Activated B cell treated with CpG ODN at 0.5 μM for 24 hours (primary cell): ENCODE measurements at regions of chr20 and their contacts with region 1.

Region 1: DNA sequence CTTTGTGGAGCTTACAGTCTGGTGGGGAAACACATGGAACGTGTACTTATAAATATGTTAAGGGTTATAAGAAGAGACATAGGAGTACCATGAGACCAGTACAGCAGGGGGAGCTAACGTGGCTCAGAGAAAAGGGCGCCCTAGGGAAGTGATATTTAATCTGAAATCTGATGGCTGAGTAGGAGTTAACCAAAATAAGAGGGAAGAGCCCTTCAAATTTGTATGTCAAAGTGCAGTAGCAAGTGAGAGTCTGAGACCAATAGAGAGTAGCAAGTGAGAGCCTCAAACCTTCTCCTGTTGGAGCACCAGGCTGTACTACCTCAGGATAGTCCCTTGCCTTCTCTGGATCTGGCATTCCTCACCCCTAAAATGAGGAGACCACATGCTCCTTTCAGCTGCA is 6.1 kb upstream of the PKIG start:
- DNase-seq: no peak
- ATAC-seq: peak; percentile 80
- H3K4me3 Mint-ChIP-seq: peak overlapping the region; percentile 72
- H3K27ac Mint-ChIP-seq: peak overlapping the region; percentile 89
- H3K4me1 Mint-ChIP-seq: peaks cover 44% of the 10 kb centered on the region
- H3K27me3 Mint-ChIP-seq: no peaks in the 10 kb centered on the region
- CTCF ChIP-seq: no peak

Region 2: GRCh38 chr20:44532259-44532980 is 43.9 kb before region 1 on chr20:
- CTCF ChIA-PET with region 1: no interaction called
- POLR2A ChIA-PET with region 1: no interaction called
- intact Hi-C with region 1: loop called (anchors 2 kb)
- DNase-seq: no peak
- ATAC-seq: no peak
- H3K4me3 Mint-ChIP-seq: no peak overlapping the region
- H3K27ac Mint-ChIP-seq: no peak overlapping the region
- H3K4me1 Mint-ChIP-seq: peaks cover 9% of the 10 kb centered on the region
- H3K27me3 Mint-ChIP-seq: no peaks in the 10 kb centered on the region
- CTCF ChIP-seq: no peak

Region 3: DNA sequence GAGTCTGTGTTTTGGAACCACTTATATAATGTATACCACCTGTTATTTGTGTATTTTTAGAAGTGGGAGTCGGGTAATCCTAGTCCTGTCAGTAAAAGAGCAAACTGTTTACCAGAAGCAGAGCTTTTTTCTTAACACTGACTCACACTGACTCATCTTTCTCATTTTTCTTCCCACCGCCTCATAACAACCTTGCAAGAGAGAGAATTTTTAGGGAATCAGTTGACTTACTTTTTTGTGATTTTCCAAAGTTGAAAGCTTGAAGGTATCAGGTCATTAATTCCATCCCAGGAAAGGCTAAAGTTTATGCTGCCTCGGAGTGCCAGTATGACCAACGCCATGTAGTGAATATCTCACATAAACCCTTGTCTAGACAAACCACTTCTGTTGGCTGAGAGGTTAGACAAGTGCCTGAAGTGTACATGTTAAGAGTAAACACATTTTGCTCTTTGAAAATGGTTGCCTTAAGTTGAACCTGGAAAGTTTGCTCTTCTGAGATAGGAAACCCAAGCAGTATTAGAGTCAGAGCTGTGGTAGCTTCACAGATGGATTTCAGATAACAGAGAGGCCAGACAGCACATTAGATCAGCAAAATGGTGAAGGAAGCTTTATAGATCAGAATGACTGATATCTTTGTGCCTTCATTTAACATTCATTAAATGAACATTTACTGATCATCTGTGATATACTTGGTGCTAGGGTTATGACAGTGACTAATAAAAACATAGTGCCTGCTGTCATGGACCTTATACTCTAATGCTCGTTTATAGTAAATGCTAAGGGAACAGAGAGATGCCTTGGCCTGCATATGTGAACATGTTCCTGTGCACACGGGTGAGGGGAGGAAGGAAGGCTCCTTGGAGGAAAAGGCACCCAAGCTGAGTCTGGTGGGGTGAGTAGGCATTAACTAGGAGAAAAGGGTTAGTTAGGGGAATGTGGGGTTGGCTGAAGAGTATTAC is 23.1 kb before region 1 on chr20:
- CTCF ChIA-PET with region 1: no interaction called
- POLR2A ChIA-PET with region 1: no interaction called
- intact Hi-C with region 1: no loop called
- DNase-seq: no peak
- ATAC-seq: no peak
- H3K4me3 Mint-ChIP-seq: no peak overlapping the region
- H3K27ac Mint-ChIP-seq: no peak overlapping the region
- H3K4me1 Mint-ChIP-seq: no peaks in the 10 kb centered on the region
- H3K27me3 Mint-ChIP-seq: peaks cover 1% of the 10 kb centered on the region
- CTCF ChIP-seq: no peak

Region 4: GRCh38 chr20:44598423-44599305 is 22.4 kb after region 1 on chr20:
- CTCF ChIA-PET with region 1: interaction called, 44 read pairs
- POLR2A ChIA-PET with region 1: interaction called, 12 read pairs
- intact Hi-C with region 1: no loop called
- DNase-seq: no peak
- ATAC-seq: peak; percentile 32
- H3K4me3 Mint-ChIP-seq: peak overlapping the region; percentile 77
- H3K27ac Mint-ChIP-seq: peak overlapping the region; percentile 87
- H3K4me1 Mint-ChIP-seq: peaks cover 87% of the 10 kb centered on the region
- H3K27me3 Mint-ChIP-seq: no peaks in the 10 kb centered on the region
- CTCF ChIP-seq: no peak

Region 5: DNA sequence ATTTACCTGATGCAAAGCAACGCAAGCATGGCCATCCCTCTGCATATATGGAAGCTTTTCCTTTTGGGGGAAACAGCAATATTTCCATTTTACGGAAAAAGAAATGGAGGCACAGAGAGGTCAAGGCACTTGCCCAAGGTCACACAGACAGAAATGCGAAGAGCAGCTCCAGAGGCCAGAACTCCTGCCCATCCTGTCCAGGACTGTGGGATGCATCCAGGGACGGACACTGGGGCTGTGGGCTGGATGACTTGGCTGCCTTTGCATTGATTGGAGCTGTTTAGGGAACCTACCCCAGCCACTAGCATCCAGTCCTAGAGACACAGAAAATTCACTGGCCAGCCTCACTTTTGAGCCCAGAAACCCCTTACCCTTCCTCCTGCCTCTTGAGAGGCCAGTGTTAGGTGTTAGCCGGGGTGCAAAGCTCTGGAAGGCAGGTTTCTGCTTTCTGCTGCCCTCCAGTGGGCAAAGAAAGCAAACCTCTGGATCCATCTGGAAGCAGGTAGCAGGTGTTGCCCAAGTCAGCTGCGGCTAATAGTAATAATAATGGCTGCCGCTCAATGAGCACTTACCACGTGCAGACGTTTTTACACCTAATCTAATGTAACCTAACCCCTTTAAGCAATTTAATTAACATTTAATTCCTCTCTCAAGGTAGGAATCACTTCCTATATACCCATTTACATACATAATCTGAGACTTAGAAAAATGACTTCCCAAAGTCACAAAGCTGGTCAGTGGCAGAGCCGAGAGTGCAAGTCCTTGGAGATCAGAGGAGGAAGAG is 107.2 kb after region 1 on chr20:
- CTCF ChIA-PET with region 1: interaction called, 14 read pairs
- POLR2A ChIA-PET with region 1: no interaction called
- intact Hi-C with region 1: loop called (anchors 1 kb)
- DNase-seq: no peak
- ATAC-seq: peak; percentile 37
- H3K4me3 Mint-ChIP-seq: no peak overlapping the region
- H3K27ac Mint-ChIP-seq: no peak overlapping the region
- H3K4me1 Mint-ChIP-seq: peaks cover 2% of the 10 kb centered on the region
- H3K27me3 Mint-ChIP-seq: peaks cover 6% of the 10 kb centered on the region
- CTCF ChIP-seq: no peak

Region 6: DNA sequence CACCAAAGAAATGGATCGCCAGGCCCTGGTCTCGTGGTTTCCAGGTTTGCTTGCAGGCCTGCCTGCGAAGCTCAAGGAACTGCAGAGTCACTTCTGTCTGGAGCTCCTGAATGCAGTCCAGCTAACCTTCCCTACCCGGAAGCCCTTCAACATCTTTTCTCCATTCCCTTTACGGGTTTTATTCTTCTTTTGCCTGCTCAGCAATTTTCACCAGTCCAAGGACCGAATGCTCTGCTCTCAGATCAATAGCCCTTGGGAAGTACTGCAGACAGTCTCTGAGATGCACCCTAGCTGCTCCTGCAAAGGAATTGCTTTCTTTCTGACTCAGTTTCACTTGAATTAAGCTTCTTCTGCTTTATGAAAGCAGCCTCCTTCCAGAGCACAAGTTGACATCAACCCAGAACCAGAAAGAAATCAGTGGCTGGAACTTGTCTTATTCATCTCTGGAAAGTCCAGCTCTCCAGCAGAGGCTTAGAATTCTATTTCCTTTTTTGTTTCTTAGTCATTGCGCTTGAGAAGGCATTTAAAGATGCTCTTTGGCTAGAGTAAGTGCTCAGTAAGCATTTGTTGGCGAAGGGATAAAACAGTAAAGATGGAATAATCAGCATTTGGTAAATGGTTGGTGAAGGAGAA is 290.5 kb after region 1 on chr20:
- CTCF ChIA-PET with region 1: interaction called, 3 read pairs
- POLR2A ChIA-PET with region 1: no interaction called
- intact Hi-C with region 1: loop called (anchors 1 kb)
- DNase-seq: no peak
- ATAC-seq: no peak
- H3K4me3 Mint-ChIP-seq: no peak overlapping the region
- H3K27ac Mint-ChIP-seq: no peak overlapping the region
- H3K4me1 Mint-ChIP-seq: peaks cover 13% of the 10 kb centered on the region
- H3K27me3 Mint-ChIP-seq: peaks cover 5% of the 10 kb centered on the region
- CTCF ChIP-seq: no peak